Cardiac septum (tissue), 1 donor: ENCODE measurements at regions of chr7 and their contacts with region 1.

Region 1: GRCh38 chr7:74032191-74032490 is 4.2 kb downstream of the ELN start:
- DNase-seq: no peak

Region 2: DNA sequence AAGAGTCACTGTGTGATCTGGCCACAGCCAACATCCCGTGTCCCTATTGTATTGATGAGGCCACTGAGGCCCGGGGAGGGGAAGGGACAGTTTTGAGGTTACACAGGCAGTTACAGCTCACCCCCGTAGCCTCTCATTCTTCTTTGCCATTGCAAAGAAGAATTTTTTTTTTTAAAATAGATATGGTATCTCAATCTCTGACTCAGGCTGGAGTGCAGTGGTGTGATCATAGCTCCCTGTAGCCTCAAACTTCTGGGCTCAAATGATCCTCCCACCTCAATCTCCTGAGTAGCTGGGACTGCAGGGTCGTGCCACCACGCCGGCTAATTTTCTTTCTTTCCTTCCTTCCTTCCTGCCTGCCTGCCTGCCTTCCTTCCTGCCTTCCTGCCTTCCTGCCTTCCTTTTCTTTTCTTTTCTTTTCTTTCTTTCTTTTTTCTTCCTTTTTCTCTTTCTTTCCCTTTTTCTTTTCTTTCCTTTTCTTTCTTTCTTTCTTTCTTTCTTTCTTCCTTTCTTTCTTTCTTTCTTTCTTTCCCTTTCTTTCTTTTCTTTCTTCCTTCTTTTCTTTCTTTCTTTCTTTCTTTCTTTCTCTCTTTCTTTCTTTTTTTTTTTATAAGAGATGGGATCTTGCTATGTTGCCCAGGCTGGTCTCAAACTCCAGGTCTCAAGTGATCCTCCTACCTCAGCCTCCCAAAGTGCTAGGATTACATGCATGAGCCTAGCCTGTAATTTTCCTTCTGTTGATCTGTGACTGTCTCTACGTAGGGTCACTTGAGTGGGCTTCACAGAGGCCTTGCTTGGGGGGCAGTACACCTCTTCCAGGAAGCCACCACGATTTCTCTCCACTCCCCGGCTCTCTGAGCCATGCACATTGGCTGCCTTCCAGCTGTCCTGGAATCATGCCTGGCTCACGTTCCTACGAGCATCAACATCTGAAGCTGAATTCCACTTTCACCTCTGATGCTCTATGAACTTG is 139.9 kb before region 1 on chr7:
- intact Hi-C with region 1: loop called (anchors 2 kb)
- DNase-seq: no peak

Region 3: DNA sequence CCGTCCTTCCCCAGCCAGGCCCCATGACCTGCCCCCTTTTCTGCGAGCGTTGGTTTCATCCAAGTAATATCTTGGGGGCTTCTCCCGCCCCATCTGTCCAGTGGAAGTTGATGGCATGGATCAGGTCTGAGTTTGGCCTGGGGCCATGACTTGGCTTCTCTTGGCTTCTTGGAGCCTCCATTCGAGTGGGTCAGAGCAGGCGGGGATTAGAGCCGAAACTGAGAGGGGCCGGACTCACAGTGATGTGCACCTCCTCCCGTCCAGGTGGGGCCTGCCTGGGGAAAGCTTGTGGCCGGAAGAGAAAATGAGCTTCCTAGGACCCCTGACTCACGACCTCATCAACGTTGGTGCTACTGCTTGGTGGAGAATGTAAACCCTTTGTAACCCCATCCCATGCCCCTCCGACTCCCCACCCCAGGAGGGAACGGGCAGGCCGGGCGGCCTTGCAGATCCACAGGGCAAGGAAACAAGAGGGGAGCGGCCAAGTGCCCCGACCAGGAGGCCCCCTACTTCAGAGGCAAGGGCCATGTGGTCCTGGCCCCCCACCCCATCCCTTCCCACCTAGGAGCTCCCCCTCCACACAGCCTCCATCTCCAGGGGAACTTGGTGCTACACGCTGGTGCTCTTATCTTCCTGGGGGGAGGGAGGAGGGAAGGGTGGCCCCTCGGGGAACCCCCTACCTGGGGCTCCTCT is 36.4 kb after region 1 on chr7:
- intact Hi-C with region 1: no loop called
- DNase-seq: no peak

Region 4: DNA sequence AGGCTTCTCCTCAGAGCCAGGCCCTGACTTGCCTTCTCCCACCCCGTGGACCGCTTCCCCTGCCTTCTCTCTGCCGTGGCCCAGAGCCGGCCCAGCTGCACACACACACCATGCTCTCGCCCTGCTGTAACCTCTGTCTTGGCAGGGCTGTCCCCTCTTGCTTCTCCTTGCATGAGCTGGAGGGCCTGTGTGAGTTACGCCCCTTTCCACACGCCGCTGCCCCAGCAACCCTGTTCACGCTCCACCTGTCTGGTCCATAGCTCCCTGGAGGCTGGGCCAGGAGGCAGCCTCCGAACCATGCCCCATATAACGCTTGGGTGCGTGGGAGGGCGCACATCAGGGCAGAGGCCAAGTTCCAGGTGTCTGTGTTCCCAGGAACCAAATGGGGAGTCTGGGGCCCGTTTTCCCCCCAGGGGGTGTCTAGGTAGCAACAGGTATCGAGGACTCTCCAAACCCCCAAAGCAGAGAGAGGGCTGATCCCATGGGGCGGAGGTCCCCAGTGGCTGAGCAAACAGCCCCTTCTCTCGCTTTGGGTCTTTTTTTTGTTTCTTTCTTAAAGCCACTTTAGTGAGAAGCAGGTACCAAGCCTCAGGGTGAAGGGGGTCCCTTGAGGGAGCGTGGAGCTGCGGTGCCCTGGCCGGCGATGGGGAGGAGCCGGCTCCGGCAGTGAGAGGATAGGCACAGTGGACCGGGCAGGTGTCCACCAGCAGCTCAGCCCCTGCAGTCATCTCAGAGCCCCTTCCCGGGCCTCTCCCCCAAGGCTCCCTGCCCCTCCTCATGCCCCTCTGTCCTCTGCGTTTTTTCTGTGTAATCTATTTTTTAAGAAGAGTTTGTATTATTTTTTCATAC is 89.5 kb after region 1 on chr7:
- intact Hi-C with region 1: no loop called
- DNase-seq: no peak